Activated CD8-positive, alpha-beta T cell treated with anti-CD3 and anti-CD28 coated beads for 36 hours (primary cell): ENCODE measurements at regions of chr7 and their contacts with region 1.

Region 1: GRCh38 chr7:23273141-23273599 is 26.0 kb upstream of the MALSU1 start:
- DNase-seq: peak; percentile 98
- ATAC-seq: peak; percentile 97
- H3K4me3 Mint-ChIP-seq: peak overlapping the region; percentile 59
- H3K27ac Mint-ChIP-seq: peak overlapping the region; percentile 47
- H3K4me1 Mint-ChIP-seq: peaks cover 12% of the 10 kb centered on the region
- H3K27me3 Mint-ChIP-seq: peaks cover 12% of the 10 kb centered on the region
- CTCF ChIP-seq: peak; percentile 75

Region 2: DNA sequence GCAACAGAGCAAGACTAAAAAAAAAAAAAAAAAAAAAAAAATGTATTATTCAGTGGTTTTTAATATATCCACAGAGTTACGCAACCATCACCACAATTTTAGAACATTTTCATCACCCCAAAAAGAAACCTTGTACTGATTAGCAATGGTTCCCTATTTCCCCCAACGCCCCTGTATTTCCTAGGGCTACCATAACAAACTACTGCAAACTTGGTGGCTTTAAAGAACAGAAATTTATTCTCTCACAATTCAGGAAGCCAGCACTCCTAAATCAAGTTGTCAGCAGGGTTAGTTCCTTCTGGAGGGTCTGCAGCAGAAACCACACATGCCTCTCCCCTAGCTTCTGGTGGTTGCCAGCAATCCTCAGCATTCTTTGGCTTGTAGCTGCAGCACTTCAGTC is 97.2 kb before region 1 on chr7:
- CTCF ChIA-PET with region 1: no interaction called
- POLR2A ChIA-PET with region 1: no interaction called
- intact Hi-C with region 1: no loop called
- DNase-seq: no peak
- ATAC-seq: no peak
- H3K4me3 Mint-ChIP-seq: no peak overlapping the region
- H3K27ac Mint-ChIP-seq: no peak overlapping the region
- H3K4me1 Mint-ChIP-seq: peaks cover 8% of the 10 kb centered on the region
- H3K27me3 Mint-ChIP-seq: no peaks in the 10 kb centered on the region
- CTCF ChIP-seq: no peak

Region 3: DNA sequence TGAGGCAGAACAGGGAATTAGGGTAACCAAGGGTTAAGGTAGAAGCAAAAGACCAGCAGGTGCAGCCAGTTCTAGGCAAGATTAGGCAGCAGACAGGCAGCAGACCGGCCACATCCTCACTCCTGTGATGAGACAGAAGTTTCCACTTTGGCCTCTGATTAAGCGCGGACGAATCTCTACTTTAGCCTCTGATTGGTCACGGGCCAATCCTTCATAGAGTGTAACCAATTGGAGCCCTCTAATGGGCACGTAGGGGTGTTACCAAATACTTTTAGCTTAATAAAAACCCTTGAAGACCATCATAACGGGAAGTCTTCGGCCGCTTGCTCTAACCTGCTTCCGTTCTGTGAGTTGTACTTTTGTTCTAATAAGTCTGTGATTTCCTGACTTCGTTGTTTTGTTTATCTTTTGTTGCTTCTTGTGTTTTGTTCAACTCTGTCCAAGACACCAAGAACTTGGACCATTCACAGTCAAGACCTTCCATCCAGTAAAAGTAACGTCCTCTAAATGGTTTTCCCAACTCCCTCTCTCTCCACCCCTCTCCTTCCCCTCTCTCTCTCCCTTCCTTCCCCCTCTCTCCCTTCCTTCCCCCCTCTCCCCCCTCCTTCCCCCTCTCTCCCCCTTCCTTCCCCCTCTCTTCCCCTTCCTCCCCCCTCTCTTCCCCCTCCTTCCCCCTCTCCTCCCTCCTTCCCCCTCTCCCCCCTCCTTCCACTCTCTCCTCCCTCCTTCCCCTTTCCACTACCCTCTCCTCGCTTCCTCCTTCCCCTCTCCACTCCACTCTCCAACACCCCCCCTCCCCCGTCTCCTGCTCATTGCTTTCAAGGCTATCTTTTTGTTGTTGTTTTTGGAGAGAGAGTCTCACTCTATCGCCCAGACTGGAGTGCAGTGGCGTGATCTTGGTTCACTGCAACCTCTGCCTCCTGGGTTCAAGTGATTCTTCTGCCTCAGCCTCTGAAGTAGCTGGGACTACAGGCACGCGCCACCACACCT is 12.8 kb after region 1 on chr7:
- CTCF ChIA-PET with region 1: interaction called, 30 read pairs
- POLR2A ChIA-PET with region 1: interaction called, 3 read pairs
- intact Hi-C with region 1: no loop called
- DNase-seq: no peak
- ATAC-seq: no peak
- H3K4me3 Mint-ChIP-seq: no peak overlapping the region
- H3K27ac Mint-ChIP-seq: no peak overlapping the region
- H3K4me1 Mint-ChIP-seq: peaks cover 13% of the 10 kb centered on the region
- H3K27me3 Mint-ChIP-seq: no peaks in the 10 kb centered on the region
- CTCF ChIP-seq: no peak

Region 4: DNA sequence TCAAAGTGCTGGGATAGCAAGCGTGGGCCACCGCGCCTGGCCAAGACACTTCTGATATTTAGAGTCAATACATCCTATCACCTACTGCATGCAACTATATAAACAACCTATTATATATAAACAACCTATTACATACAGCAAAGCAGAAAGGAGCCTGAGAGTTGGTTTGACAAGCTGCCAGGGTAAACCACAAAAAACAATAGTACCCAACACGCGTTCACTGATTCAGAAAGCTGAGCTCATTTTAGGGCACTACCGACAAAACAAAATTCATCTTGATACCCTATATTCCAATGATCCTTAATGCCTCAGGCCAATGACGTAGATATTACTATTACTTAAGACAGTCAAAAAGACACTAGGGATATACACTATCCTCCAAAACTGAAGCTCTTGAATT is 42.2 kb after region 1 on chr7:
- CTCF ChIA-PET with region 1: interaction called, 10 read pairs
- POLR2A ChIA-PET with region 1: no interaction called
- intact Hi-C with region 1: no loop called
- DNase-seq: no peak
- ATAC-seq: no peak
- H3K4me3 Mint-ChIP-seq: no peak overlapping the region
- H3K27ac Mint-ChIP-seq: no peak overlapping the region
- H3K4me1 Mint-ChIP-seq: peaks cover 19% of the 10 kb centered on the region
- H3K27me3 Mint-ChIP-seq: peaks cover 7% of the 10 kb centered on the region
- CTCF ChIP-seq: no peak

Region 5: GRCh38 chr7:23394488-23395171 is 121.5 kb after region 1 on chr7:
- CTCF ChIA-PET with region 1: interaction called, 10 read pairs
- POLR2A ChIA-PET with region 1: no interaction called
- intact Hi-C with region 1: no loop called
- DNase-seq: no peak
- ATAC-seq: no peak
- H3K4me3 Mint-ChIP-seq: no peak overlapping the region
- H3K27ac Mint-ChIP-seq: no peak overlapping the region
- H3K4me1 Mint-ChIP-seq: peaks cover 24% of the 10 kb centered on the region
- H3K27me3 Mint-ChIP-seq: peaks cover 3% of the 10 kb centered on the region
- CTCF ChIP-seq: no peak

Region 6: GRCh38 chr7:23462846-23463245 is 189.7 kb after region 1 on chr7:
- CTCF ChIA-PET with region 1: interaction called, 37 read pairs
- POLR2A ChIA-PET with region 1: interaction called, 3 read pairs
- intact Hi-C with region 1: no loop called
- DNase-seq: peak; percentile 31
- ATAC-seq: peak; percentile 51
- H3K4me3 Mint-ChIP-seq: no peak overlapping the region
- H3K27ac Mint-ChIP-seq: no peak overlapping the region
- H3K4me1 Mint-ChIP-seq: peaks cover 11% of the 10 kb centered on the region
- H3K27me3 Mint-ChIP-seq: peaks cover 56% of the 10 kb centered on the region
- CTCF ChIP-seq: no peak

Region 7: DNA sequence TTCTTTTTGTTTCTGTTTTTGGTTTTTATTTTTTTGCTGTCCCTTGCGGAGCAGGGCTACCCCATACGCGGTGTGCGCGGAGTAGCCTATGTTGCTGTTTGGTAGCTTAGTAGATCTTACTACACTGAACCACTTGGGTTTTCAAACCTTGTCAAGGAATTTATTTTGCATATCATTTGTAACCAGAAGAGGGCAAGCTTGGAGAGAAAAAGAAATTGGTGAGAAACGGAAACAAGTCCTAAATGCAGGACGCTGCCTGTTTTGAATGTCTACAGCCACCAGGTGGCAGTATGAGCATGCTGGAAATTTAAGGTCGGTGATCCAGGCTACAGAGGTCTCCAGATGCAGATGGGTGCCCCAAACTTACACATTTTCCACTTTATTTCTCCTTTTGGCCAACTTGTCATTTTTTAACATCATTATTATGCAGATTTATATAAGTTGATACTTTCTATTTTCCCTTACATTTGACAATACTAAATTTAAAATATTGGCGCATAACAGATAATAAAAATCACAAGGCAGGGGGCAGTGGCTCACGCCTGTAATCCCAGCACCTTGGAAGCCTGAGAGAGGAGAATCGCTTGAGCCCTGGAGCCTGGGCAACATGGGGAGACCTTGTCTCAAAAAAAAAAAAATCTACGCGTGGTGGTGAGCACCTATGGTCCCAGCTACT is 273.9 kb after region 1 on chr7:
- CTCF ChIA-PET with region 1: interaction called, 53 read pairs
- POLR2A ChIA-PET with region 1: no interaction called
- intact Hi-C with region 1: loop called (anchors 1 kb)
- DNase-seq: peak; percentile 87
- ATAC-seq: peak; percentile 93
- H3K4me3 Mint-ChIP-seq: no peak overlapping the region
- H3K27ac Mint-ChIP-seq: no peak overlapping the region
- H3K4me1 Mint-ChIP-seq: peaks cover 8% of the 10 kb centered on the region
- H3K27me3 Mint-ChIP-seq: no peaks in the 10 kb centered on the region
- CTCF ChIP-seq: peak; percentile 93